ENCODE measurements at regions of chr2 and their contacts with region 1.

Region 1: GRCh38 chr2:10448208-10448645 is at the start of gene ODC1:
- DNase-seq: peak; percentile 96 to 99 (median 97)
- ATAC-seq: peak; percentile 92
- H3K4me3 ChIP-seq: peak within 1 kb of the TSS; percentile 91
- H3K4me3 Mint-ChIP-seq: peak within 1 kb of the TSS; percentile 81 to 95 (median 86)
- H3K27ac ChIP-seq: peak within 1 kb of the TSS; percentile 88
- H3K27ac Mint-ChIP-seq: peak within 1 kb of the TSS; percentile 76 to 94 (median 89)
- H3K4me1 ChIP-seq: peaks cover 12 to 26% of the 10 kb centered on the region in 2 donors
- H3K4me1 Mint-ChIP-seq: peaks cover 7 to 47% (median 24%) of the 10 kb centered on the region in 7 donors
- H3K27me3 ChIP-seq: no peaks in the 10 kb centered on the region
- H3K27me3 Mint-ChIP-seq: no peaks in the 10 kb centered on the region
- total RNA-seq, gene ODC1: 32.7 to 88.2 (median 52.4) TPM

Region 2: DNA sequence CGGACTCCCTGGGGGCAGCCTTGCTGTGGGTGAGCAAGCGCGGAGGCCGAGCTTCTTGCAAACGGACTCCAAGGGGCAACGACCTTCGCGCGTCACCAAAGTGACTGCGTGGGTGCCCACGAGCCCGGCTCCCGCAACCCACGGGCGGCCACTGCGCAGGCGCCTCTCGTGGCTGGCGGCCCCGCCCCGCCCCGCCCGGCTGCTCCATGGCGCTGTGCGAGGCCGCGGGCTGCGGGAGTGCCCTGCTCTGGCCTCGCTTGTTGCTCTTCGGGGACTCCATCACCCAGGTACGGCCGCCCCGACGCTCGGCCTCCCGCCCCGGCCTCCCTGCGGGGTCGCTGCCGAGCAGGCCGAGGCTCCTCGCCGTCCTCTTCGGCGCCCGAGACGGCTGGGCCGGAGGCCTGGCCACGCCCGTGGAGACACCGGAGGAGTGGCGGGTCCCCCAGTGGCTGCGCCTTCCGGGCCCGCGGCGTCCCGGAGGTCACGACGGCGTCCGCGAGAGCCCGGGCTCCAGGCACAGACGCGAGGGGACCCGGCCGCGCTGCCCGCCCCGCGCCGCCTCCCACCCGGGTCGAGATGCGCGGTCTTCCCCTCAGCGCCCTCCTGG is 973.8 kb before region 1 on chr2 and contains the start of gene IAH1:
- CTCF ChIA-PET with region 1: no interaction called
- POLR2A ChIA-PET with region 1: no interaction called
- intact Hi-C with region 1: loop called (anchors 2 kb)
- DNase-seq: peak in 8 of 9 donors; percentile 66 to 81 (median 78)
- ATAC-seq: peak; percentile 89
- H3K4me3 ChIP-seq: peak within 1 kb of the TSS; percentile 82
- H3K4me3 Mint-ChIP-seq: peak within 1 kb of the TSS; percentile 81 to 89 (median 84)
- H3K27ac ChIP-seq: peak within 1 kb of the TSS; percentile 95
- H3K27ac Mint-ChIP-seq: peak within 1 kb of the TSS; percentile 83 to 95 (median 88)
- H3K4me1 ChIP-seq: peaks cover 11 to 21% of the 10 kb centered on the region in 2 donors
- H3K4me1 Mint-ChIP-seq: peaks cover 20 to 53% (median 45%) of the 10 kb centered on the region in 7 donors
- H3K27me3 ChIP-seq: no peaks in the 10 kb centered on the region
- H3K27me3 Mint-ChIP-seq: no peaks in the 10 kb centered on the region
- total RNA-seq, gene IAH1: 43.9 to 62.7 (median 49.7) TPM

Region 3: DNA sequence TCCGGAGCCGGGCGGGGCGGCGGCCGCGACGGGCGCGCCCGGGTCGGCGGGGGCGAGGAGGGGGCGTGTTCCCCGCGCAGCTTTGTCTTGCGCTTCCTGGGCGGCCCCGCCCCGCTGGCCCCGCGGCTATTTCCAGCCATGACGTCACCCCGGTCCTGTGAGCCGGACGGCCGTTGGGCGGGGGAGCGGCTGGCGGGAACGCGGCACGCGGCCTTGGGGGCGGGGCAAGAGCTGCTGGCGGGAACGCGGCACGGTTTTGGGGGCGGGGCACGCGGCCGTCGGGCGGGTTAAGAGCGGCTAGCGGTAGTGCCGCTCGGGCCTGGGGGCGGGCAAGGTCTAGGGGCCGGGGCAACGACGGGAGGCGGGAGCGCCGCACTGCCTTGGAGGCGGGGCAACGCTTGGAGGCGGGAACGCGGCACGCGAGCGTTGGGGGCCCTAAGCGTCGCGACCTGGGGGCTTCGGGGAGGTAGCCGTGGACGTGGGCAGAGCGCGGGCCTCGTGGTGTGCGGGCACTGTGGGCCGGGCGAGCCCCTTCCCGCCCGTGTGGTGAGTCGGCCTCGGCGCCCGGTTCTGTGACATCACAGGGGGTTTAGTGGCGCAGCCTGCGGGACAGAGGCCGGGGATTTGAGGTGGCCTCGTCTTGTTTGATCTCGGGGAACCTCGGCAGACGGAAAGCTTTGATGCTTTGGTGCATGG is 404.2 kb before region 1 on chr2:
- CTCF ChIA-PET with region 1: no interaction called
- POLR2A ChIA-PET with region 1: interaction called, 3 read pairs
- intact Hi-C with region 1: loop called (anchors 1 kb)
- DNase-seq: peak; percentile 79 to 93 (median 89)
- ATAC-seq: peak; percentile 73
- H3K4me3 ChIP-seq: peak overlapping the region; percentile 48
- H3K4me3 Mint-ChIP-seq: peak overlapping the region; percentile 76 to 89 (median 84)
- H3K27ac ChIP-seq: peak overlapping the region; percentile 76
- H3K27ac Mint-ChIP-seq: peak overlapping the region; percentile 82 to 95 (median 88)
- H3K4me1 ChIP-seq: peaks cover 6% of the 10 kb centered on the region in 2 donors
- H3K4me1 Mint-ChIP-seq: peaks cover 14 to 35% (median 29%) of the 10 kb centered on the region in 7 donors
- H3K27me3 ChIP-seq: no peaks in the 10 kb centered on the region
- H3K27me3 Mint-ChIP-seq: peaks cover 0 to 31% (median 0%) of the 10 kb centered on the region in 5 donors

Region 4: GRCh38 chr2:10408649-10409579 is 39.3 kb before region 1 on chr2:
- CTCF ChIA-PET with region 1: interaction called, 5 read pairs
- POLR2A ChIA-PET with region 1: interaction called, 5 read pairs
- intact Hi-C with region 1: loop called in 1 of 2 experiments (anchors 1 kb)
- DNase-seq: peak; percentile 65 to 85 (median 80)
- ATAC-seq: peak; percentile 91
- H3K4me3 ChIP-seq: peak overlapping the region; percentile 35
- H3K4me3 Mint-ChIP-seq: peak overlapping the region; percentile 64 to 89 (median 78)
- H3K27ac ChIP-seq: peak overlapping the region; percentile 33
- H3K27ac Mint-ChIP-seq: peak overlapping the region; percentile 66 to 96 (median 86)
- H3K4me1 ChIP-seq: peaks cover 29 to 39% of the 10 kb centered on the region in 2 donors
- H3K4me1 Mint-ChIP-seq: peaks cover 29 to 52% (median 41%) of the 10 kb centered on the region in 7 donors
- H3K27me3 ChIP-seq: no peaks in the 10 kb centered on the region
- H3K27me3 Mint-ChIP-seq: no peaks in the 10 kb centered on the region

Region 5: GRCh38 chr2:10424051-10424450 is 24.2 kb before region 1 on chr2:
- CTCF ChIA-PET with region 1: no interaction called
- POLR2A ChIA-PET with region 1: no interaction called
- intact Hi-C with region 1: no loop called
- DNase-seq: no peak
- ATAC-seq: no peak
- H3K4me3 ChIP-seq: no peak overlapping the region
- H3K4me3 Mint-ChIP-seq: no peak overlapping the region
- H3K27ac ChIP-seq: no peak overlapping the region
- H3K27ac Mint-ChIP-seq: no peak overlapping the region
- H3K4me1 ChIP-seq: no peaks in the 10 kb centered on the region
- H3K4me1 Mint-ChIP-seq: peaks cover 0 to 3% (median 0%) of the 10 kb centered on the region in 7 donors
- H3K27me3 ChIP-seq: no peaks in the 10 kb centered on the region
- H3K27me3 Mint-ChIP-seq: no peaks in the 10 kb centered on the region

Region 6: GRCh38 chr2:10584796-10585475 is 136.7 kb after region 1 on chr2:
- CTCF ChIA-PET with region 1: no interaction called
- POLR2A ChIA-PET with region 1: no interaction called
- intact Hi-C with region 1: loop called in 1 of 2 experiments (anchors 5 kb)
- DNase-seq: no peak
- ATAC-seq: no peak
- H3K4me3 ChIP-seq: no peak overlapping the region
- H3K4me3 Mint-ChIP-seq: no peak overlapping the region
- H3K27ac ChIP-seq: no peak overlapping the region
- H3K27ac Mint-ChIP-seq: no peak overlapping the region
- H3K4me1 ChIP-seq: no peaks in the 10 kb centered on the region
- H3K4me1 Mint-ChIP-seq: peaks cover 1 to 33% (median 20%) of the 10 kb centered on the region in 7 donors
- H3K27me3 ChIP-seq: no peaks in the 10 kb centered on the region
- H3K27me3 Mint-ChIP-seq: no peaks in the 10 kb centered on the region

Region 7: GRCh38 chr2:11129598-11130449 is 681.6 kb after region 1 on chr2:
- CTCF ChIA-PET with region 1: no interaction called
- POLR2A ChIA-PET with region 1: no interaction called
- intact Hi-C with region 1: loop called in 1 of 2 experiments (anchors 5 kb)
- DNase-seq: peak; percentile 72 to 91 (median 88)
- ATAC-seq: peak; percentile 93
- H3K4me3 ChIP-seq: peak overlapping the region; percentile 66
- H3K4me3 Mint-ChIP-seq: peak overlapping the region; percentile 72 to 88 (median 78)
- H3K27ac ChIP-seq: peak overlapping the region; percentile 75
- H3K27ac Mint-ChIP-seq: peak overlapping the region in 8 of 9 donors; percentile 77 to 92 (median 86)
- H3K4me1 ChIP-seq: peaks cover 25 to 34% of the 10 kb centered on the region in 2 donors
- H3K4me1 Mint-ChIP-seq: peaks cover 8 to 45% (median 33%) of the 10 kb centered on the region in 7 donors
- H3K27me3 ChIP-seq: no peaks in the 10 kb centered on the region
- H3K27me3 Mint-ChIP-seq: peaks cover 0 to 15% (median 0%) of the 10 kb centered on the region in 5 donors

Measured in naive thymus-derived CD4-positive, alpha-beta T cell (primary cell).